ENCODE measurements at regions of chr17 and their contacts with region 1.

Region 1: GRCh38 chr17:5065227-5065744 is 13.0 kb upstream of the ZFP3 start:
- DNase-seq: no peak
- H3K4me3 ChIP-seq: no peak overlapping the region
- H3K4me1 ChIP-seq: no peaks in the 10 kb centered on the region
- H3K27me3 ChIP-seq: no peaks in the 10 kb centered on the region

Region 2: DNA sequence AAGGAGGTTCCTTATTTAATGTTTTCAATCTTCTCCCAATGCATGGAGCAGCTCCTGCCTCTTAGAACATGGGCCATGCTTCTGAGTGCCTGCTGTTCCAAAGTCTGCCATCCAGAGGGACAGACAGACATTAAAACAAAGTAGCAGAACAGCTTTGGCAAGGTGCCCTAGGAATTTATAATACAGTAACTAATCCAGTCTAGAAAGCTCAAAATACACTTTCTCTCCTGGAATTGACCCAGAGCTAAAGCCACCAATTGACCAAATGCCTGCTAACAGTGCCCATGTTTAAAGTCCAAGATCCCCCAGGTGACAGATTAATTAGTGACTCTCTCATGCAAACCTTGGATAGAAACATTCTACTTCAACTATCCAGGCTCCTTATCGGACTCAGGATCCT is 151.3 kb before region 1 on chr17:
- in situ Hi-C with region 1: loop called (anchors 10 kb)
- DNase-seq: no peak
- H3K4me3 ChIP-seq: no peak overlapping the region
- H3K4me1 ChIP-seq: peaks cover 3% of the 10 kb centered on the region; the same call in 1 of the 2 replicates
- H3K27me3 ChIP-seq: no peaks in the 10 kb centered on the region

Region 3: DNA sequence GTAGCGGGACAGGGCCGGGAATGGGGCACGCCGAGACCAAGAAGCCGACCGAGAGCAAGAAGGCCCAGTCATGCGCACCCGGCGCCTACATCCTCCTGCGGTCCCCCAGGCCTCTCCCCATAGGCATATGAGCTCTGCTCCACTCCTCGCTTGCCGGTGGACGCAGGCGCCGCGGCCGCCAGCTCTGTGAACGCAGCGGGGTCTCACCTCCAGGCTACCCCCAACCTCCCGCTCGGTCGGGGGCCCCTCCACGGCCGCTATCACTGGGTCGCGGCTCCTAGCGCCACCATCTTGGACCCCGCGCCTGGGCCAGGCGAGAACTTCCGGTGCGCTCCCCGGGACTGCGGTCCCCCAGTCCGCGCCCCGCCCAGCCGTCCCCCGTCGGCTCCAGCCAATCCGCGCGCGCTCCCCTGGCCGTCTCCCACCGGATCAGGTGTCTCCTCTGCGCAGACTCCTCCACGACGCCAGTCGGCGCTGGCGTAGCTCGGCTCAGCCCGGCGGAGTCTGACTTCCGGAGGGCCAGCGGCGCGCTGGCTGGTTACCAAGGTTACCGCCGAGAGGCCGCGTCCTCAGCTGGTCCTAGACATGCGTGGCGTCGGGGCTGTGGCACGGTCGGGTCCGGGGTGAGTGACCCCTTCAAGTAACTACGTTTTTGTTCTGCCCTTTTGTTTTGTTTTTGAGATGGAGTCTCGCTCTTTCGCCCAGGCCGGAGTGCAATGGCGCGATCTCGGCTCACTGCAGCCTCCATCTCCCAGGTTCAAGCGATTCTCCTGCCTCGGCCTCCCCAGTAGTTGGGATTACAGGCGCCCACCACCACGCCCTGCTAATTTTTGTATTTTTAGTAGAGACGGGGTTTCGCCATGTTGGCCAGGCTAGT is 126.5 kb after region 1 on chr17 and contains the start of gene ZNF594:
- in situ Hi-C with region 1: no loop called
- DNase-seq: peak; percentile 92 to 98
- H3K4me3 ChIP-seq: peak within 1 kb of the TSS; percentile 87
- H3K4me1 ChIP-seq: no peaks in the 10 kb centered on the region; the same call in 1 of the 2 replicates
- H3K27me3 ChIP-seq: no peaks in the 10 kb centered on the region

Measured in HAP-1 (cell line).